ENCODE measurements at regions of chr16 and their contacts with region 1.

Region 1: DNA sequence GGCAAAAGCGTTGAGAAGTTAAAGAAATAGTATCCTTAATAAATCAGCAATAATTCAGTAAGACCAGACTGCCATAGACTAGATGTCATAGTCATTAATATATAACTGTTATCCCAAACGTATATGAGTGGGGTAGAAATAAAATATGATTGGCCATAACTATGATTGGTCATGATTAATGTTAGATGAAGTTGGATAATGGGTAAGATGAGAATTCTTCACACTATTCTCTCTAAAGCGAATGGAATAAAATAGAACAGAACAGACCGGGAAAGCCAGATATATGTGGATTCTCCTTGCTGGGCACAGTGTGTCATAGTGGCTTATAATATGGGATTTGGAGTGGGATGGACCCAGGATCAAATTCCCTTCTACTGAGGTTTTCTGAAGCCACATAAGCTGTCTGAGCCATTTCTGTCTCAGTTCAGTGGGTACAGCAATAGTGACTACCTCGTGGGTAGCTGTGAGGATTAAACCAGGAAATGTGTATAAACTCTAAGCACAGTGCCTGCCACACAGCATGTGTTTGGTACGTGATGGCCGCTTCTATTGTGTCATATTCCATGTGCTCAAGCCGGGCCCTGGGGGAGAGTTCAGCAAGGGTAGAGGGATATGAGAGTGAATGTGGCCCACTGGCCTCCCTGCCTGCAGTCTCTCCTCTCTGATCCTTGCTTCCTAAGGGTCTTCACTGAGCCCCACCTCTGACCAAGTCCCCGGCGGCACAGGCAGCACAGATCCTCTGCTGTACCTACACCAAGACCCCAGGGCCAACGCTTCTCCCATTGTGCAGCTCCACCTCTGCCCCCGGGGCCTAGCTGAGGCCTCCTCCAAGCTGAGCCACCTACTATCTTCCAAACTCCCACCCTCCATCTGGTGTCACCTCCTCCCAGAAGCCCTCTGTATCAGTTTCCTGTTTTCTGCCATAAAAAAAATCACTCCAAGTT is 3.7 kb downstream of the CETP start:
- DNase-seq: no peak
- H3K4me3 ChIP-seq: no peak overlapping the region
- H3K27ac ChIP-seq: peak overlapping the region; percentile 47
- H3K27me3 ChIP-seq: no peaks in the 10 kb centered on the region
- CTCF ChIP-seq: no peak

Region 2: DNA sequence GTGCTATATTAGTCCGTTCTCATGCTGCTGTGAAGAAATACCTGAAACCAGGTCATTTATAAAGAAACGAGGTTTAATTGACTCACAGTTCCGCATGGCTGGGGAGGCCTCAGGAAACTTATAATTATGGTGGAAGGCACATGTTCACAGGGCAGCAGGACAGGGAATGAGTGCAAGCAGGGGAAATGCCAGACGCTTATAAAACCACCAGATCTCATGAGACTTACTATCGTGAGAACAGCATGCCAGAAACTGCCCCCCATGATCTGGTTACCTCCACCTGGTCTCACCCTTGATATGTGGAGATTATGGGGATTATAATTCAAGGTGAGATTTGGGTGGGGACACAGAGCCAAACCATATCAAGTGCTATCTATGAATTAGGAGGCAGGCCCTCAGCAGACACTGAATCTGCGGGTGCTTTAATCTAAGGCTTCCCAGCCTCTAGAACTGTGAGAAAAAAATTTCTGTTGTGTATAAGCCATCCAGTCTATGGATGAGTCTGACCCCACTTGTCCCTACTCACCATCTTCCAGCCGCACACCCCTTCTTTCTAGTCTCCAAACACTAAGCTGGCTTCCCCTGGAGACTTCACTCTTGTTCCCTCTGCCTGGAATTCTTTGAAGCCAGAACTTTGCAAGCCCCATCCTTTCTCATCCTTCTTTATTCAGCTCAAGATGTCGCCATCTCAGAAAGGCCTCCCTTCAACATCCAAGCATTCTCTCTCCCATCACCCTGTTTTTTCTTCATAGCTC is 236.3 kb before region 1 on chr16:
- CTCF ChIA-PET with region 1: no interaction called
- POLR2A ChIA-PET with region 1: interaction called, 11 read pairs
- DNase-seq: no peak
- H3K4me3 ChIP-seq: peak overlapping the region; percentile 99
- H3K27ac ChIP-seq: peak overlapping the region; percentile 86
- H3K27me3 ChIP-seq: no peaks in the 10 kb centered on the region
- CTCF ChIP-seq: no peak

Region 3: GRCh38 chr16:56911771-56912571 is 53.5 kb before region 1 on chr16:
- CTCF ChIA-PET with region 1: no interaction called
- POLR2A ChIA-PET with region 1: no interaction called
- DNase-seq: no peak
- H3K4me3 ChIP-seq: no peak overlapping the region
- H3K27ac ChIP-seq: peak overlapping the region; percentile 21
- H3K27me3 ChIP-seq: no peaks in the 10 kb centered on the region
- CTCF ChIP-seq: no peak

Measured in AG04450 (cell line).